Ovary (tissue), 10 donors: ENCODE measurements at regions of chrX and their contacts with region 1.

Region 1: GRCh38 chrX:35786271-35786670 is 11.9 kb upstream of the MAGEB16 start:
- DNase-seq: no peak
- H3K4me3 ChIP-seq: no peak overlapping the region
- H3K27ac ChIP-seq: no peak overlapping the region
- H3K4me1 ChIP-seq: no peaks in the 10 kb centered on the region
- H3K27me3 ChIP-seq: no peaks in the 10 kb centered on the region
- CTCF ChIP-seq: no peak
- EP300 ChIP-seq: no peak
- POLR2A ChIP-seq: no peak

Region 2: GRCh38 chrX:35439692-35440091 is 346.6 kb before region 1 on chrX:
- intact Hi-C with region 1: no loop called
- DNase-seq: no peak
- H3K4me3 ChIP-seq: no peak overlapping the region
- H3K27ac ChIP-seq: no peak overlapping the region
- H3K4me1 ChIP-seq: no peaks in the 10 kb centered on the region
- H3K27me3 ChIP-seq: no peaks in the 10 kb centered on the region
- CTCF ChIP-seq: no peak
- EP300 ChIP-seq: no peak
- POLR2A ChIP-seq: no peak

Region 3: DNA sequence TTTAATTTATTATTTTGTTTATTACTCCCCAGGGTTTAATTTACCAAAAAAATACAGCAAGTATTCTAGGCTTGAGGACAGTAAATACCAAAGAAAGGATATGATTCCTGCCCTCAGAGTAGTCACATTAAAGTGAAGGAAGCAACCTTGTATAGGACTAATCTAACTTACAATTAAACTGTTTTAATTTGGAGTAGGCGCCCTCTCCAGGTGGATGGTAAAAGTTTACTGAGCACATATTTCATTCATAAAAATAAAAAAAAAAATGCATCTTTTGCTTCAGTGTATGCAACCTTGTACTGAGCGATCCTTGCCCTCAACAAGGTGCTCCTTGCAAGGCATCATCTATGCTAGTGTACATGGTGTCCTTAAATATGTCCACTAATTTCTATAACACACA is 60.1 kb before region 1 on chrX:
- intact Hi-C with region 1: loop called in 1 of 4 experiments (anchors 10 kb)
- DNase-seq: no peak
- H3K4me3 ChIP-seq: no peak overlapping the region
- H3K27ac ChIP-seq: no peak overlapping the region
- H3K4me1 ChIP-seq: no peaks in the 10 kb centered on the region
- H3K27me3 ChIP-seq: no peaks in the 10 kb centered on the region
- CTCF ChIP-seq: no peak
- EP300 ChIP-seq: no peak
- POLR2A ChIP-seq: no peak